CD4-positive, alpha-beta memory T cell (primary cell): ENCODE measurements at regions of chr9 and their contacts with region 1.

Region 1: DNA sequence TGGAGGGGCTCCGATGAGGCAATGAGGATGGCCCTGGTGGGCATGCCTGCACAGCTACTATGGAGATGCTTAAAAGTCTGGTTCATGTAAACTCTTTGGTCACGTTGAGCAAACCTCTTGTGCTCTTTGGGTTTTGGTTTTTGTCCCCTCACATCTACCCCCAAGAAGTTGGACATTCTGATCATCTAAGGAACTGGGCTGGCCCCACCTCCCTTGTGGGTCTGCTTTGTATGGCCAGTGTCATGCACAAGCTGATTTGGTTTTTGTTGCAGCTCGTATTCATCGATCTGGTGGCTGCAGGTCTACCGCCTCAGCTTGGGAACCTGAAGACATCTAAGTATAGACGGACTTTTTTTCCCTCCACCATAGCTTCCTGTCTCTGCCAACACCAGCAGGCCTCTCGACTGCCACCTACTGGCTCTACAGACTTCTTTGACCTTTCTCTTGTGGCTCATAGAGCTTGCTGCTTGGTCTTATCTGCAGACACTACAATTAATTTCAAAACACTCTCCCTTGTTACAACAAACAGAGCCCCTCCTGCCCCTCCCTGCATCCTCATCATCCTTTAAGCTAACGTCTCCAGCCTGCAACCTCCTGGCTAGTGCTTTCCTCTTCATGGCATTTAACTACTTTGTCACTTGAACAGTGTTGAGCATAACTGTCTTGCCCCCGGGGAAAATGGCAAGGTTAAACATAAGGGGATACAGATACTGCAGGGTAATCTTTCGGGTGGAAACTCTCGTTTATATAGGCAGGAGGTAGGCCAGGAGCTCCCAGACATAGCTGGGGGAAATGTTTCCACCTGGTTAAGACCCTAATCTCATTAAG is 34.5 kb downstream of the TSTD2 start:
- DNase-seq: peak; percentile 65 to 71 (median 68)
- H3K4me3 ChIP-seq: no peak overlapping the region
- H3K4me3 Mint-ChIP-seq: peak overlapping the region in 5 of 8 donors; percentile 49 to 73 (median 54)
- H3K27ac ChIP-seq: no peak overlapping the region
- H3K27ac Mint-ChIP-seq: peak overlapping the region in 2 of 7 donors; percentile 33 to 79
- H3K4me1 ChIP-seq: no peaks in the 10 kb centered on the region
- H3K4me1 Mint-ChIP-seq: peaks cover 7 to 9% (median 7%) of the 10 kb centered on the region in 4 donors
- H3K27me3 ChIP-seq: no peaks in the 10 kb centered on the region
- H3K27me3 Mint-ChIP-seq: no peaks in the 10 kb centered on the region

Region 2: DNA sequence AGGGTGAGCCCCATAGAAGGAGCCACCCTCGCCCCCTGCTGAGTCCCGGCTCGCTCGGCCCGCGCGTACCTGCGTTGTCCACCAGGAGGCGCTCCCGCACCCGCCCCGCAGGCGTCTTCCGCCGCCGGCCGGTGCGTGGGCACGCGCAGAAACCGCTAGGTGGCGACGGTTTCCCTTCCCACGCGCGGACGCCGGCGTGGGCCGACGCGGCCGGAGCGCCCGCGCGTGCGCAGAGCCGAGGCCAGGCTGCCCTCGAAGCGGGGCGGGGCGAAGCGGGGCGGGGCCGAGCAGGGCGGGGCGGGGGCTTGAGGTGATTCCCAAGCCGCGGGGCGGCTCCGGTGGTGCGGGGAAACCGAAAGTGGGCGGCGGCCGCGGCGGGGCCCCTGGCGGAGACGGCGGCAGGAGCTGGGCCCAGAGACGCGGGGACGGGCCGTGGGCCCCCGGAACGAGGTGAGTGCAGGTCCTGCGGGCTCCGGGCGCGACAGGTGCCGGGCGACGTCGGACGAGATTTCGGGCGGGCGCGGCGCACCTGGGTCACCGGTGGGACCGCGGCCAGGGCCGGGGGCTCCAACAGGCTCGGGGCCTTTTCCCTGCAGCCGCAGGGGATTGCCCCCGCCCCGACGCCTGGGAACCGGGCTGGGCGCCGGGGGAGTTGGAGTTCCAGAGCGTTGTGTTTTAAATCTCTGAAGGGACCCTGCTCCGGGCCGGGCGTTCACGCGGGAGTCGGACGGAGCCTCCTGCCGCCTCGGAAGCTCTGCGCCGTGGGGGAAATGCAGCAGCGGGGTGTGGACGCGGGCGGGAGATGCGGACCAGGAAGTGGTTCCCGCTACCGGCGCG is 186.7 kb before region 1 on chr9 and contains the start of gene TDRD7:
- CTCF ChIA-PET with region 1: interaction called, 24 read pairs
- POLR2A ChIA-PET with region 1: interaction called, 4 read pairs
- intact Hi-C with region 1: loop called (anchors 1 kb)
- DNase-seq: peak; percentile 86 to 94 (median 90)
- H3K4me3 ChIP-seq: peak within 1 kb of the TSS; percentile 38 to 61
- H3K4me3 Mint-ChIP-seq: peak within 1 kb of the TSS; percentile 82 to 93 (median 90)
- H3K27ac ChIP-seq: peak within 1 kb of the TSS; percentile 84
- H3K27ac Mint-ChIP-seq: peak within 1 kb of the TSS; percentile 82 to 96 (median 93)
- H3K4me1 ChIP-seq: peaks cover 21% of the 10 kb centered on the region
- H3K4me1 Mint-ChIP-seq: peaks cover 23 to 37% (median 32%) of the 10 kb centered on the region in 4 donors
- H3K27me3 ChIP-seq: no peaks in the 10 kb centered on the region
- H3K27me3 Mint-ChIP-seq: peaks cover 5 to 16% of the 10 kb centered on the region in 2 donors
- total RNA-seq, gene TDRD7: 12.7 to 13.6 TPM

Region 3: GRCh38 chr9:97575673-97576200 is 22.9 kb before region 1 on chr9:
- CTCF ChIA-PET with region 1: interaction called, 21 read pairs
- POLR2A ChIA-PET with region 1: no interaction called
- intact Hi-C with region 1: no loop called
- DNase-seq: no peak
- H3K4me3 ChIP-seq: peak overlapping the region in 1 of 2 donors; percentile 60
- H3K4me3 Mint-ChIP-seq: peak overlapping the region; percentile 90 to 96 (median 94)
- H3K27ac ChIP-seq: no peak overlapping the region
- H3K27ac Mint-ChIP-seq: peak overlapping the region; percentile 54 to 91 (median 60)
- H3K4me1 ChIP-seq: peaks cover 7% of the 10 kb centered on the region
- H3K4me1 Mint-ChIP-seq: peaks cover 15 to 17% (median 16%) of the 10 kb centered on the region in 4 donors
- H3K27me3 ChIP-seq: no peaks in the 10 kb centered on the region
- H3K27me3 Mint-ChIP-seq: no peaks in the 10 kb centered on the region

Region 4: GRCh38 chr9:97623946-97624345 is 25.3 kb after region 1 on chr9:
- CTCF ChIA-PET with region 1: interaction called, 10 read pairs
- POLR2A ChIA-PET with region 1: no interaction called
- intact Hi-C with region 1: no loop called
- DNase-seq: no peak
- H3K4me3 ChIP-seq: no peak overlapping the region
- H3K4me3 Mint-ChIP-seq: no peak overlapping the region
- H3K27ac ChIP-seq: no peak overlapping the region
- H3K27ac Mint-ChIP-seq: peak overlapping the region in 1 of 7 donors; percentile 47
- H3K4me1 ChIP-seq: no peaks in the 10 kb centered on the region
- H3K4me1 Mint-ChIP-seq: peaks cover 0 to 4% (median 2%) of the 10 kb centered on the region in 4 donors
- H3K27me3 ChIP-seq: no peaks in the 10 kb centered on the region
- H3K27me3 Mint-ChIP-seq: no peaks in the 10 kb centered on the region